ENCODE measurements at regions of chr20 and their contacts with region 1.

Region 1: DNA sequence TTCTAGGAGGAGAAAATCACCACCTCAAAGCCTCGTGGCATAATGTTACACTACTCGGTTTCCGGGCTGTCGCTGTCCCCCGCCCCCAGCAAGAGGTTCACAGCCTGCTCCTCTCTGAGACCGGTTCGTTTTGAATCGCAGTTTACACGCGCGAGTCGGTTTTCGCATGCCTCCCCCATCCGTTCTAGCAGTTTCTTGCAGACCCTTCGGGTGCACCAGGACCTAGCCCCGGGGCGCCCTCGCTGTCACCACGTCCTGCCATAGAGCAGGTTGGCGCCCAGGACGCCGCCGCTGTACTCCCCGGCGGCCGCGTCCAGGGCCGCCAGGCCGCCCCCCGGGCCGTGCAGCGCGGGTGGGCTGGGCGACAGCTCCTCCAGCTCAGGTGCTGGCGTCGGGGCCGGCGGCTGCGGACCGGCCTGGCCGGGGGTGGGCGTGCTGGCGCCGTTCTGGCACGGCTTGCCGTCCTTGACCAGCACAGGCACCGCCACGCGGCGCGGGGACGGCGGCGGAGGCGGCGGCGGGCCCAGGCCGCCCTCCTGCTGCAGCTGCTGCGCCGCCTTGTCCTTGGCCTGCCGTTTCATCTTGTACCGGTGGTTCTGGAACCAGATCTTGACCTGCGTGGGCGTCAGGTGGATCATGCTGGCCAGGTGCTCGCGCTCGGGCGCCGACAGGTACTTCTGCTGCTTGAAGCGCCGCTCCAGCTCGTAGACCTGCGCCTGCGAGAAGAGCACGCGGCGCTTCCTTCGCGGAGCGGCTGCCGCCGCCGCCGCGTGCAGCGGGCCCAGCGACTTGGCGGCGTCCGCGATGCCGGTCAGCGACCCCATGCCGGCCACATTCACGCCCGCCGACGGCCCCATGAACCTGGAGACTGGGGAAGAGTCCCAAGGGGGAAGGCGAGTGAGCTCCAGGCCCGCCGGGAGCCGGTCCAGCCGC is 1.4 kb downstream of the NKX2-4 start:
- DNase-seq: peak; percentile 84
- H3K4me3 Mint-ChIP-seq: peak overlapping the region; percentile 71
- H3K27ac Mint-ChIP-seq: peak overlapping the region; percentile 46
- H3K4me1 Mint-ChIP-seq: peaks cover 23% of the 10 kb centered on the region
- H3K27me3 Mint-ChIP-seq: peaks cover 72% of the 10 kb centered on the region

Region 2: DNA sequence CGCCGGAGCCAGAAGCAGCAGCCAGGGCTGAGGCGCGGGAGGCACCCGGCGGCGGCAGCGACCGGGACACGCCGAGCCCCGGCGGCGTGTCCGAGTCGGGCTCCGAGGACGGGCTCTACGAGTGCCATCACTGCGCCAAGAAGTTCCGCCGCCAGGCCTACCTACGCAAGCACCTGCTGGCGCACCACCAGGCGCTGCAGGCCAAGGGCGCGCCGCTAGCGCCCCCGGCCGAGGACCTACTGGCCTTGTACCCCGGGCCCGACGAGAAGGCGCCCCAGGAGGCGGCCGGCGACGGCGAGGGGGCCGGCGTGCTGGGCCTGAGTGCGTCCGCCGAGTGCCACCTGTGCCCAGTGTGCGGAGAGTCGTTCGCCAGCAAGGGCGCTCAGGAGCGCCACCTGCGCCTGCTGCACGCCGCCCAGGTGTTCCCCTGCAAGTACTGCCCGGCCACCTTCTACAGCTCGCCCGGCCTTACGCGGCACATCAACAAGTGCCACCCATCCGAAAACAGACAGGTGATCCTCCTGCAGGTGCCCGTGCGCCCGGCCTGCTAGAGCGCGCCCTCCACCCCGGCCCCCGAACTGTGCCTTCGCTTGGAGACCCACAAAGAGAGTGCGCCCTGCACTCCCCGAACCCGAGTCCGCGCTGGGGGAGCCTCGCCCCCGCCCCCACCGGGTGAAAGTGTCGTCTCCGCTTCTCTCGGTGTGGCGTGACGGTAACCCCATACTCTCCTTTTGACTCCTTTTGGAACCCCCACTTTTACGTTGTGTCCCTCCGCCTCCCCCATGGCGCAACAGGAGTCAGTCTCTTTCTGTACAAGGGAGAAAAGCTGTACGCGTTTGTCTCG is 1026.5 kb before region 1 on chr20:
- intact Hi-C with region 1: loop called (anchors 5 kb)
- DNase-seq: peak; percentile 62
- H3K4me3 Mint-ChIP-seq: peak overlapping the region; percentile 83
- H3K27ac Mint-ChIP-seq: peak overlapping the region; percentile 83
- H3K4me1 Mint-ChIP-seq: peaks cover 19% of the 10 kb centered on the region
- H3K27me3 Mint-ChIP-seq: peaks cover 56% of the 10 kb centered on the region

Region 3: DNA sequence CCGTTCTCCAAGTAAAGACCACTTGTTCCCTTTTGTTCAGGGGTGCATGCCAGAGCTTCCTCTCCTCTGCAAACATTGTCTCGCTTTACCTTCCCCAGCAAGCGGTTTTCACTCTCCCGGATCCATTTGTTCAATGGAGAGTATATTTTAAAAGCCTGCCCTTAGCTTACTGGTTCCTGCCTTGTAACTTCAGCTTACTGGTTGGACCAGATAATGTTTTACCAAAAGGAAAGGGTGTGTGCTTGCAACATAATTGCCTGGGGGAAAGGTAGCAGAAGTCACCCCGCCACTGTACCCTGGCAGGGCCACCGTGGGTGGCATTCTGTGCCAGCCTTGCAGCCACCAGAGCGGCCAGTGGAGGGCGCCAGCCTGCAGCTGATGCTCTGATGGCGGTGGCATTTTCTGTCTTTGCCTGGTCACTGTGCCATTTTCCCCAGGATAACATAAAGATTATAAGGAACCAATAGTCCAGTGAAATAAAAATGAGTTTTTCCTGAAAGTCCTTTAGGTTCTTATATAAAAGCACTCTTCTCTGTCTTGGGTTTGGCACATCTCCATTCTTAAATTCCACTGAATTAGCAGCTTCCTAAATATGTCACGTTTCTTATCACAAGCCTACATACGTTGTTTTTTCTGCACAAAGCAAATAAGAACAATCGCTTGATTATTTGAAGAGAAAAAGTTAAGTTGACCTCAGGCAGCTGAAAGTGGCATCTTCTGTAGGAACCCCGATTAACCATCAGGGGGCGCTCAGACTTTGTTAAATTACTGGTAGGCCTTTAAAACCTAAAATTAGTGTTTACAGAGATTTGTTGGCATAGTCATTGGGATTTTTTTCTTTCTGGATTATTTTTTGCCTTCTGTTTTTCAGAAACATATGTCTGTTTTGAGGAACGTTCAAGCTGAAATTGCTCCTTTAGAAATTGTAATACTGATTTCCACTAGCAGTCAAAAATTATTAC is 160.2 kb before region 1 on chr20:
- intact Hi-C with region 1: loop called (anchors 5 kb)
- DNase-seq: peak; percentile 89
- H3K4me3 Mint-ChIP-seq: no peak overlapping the region
- H3K27ac Mint-ChIP-seq: no peak overlapping the region
- H3K4me1 Mint-ChIP-seq: peaks cover 2% of the 10 kb centered on the region
- H3K27me3 Mint-ChIP-seq: no peaks in the 10 kb centered on the region

Region 4: GRCh38 chr20:21342656-21343345 is 53.1 kb before region 1 on chr20:
- intact Hi-C with region 1: no loop called
- DNase-seq: no peak
- H3K4me3 Mint-ChIP-seq: no peak overlapping the region
- H3K27ac Mint-ChIP-seq: no peak overlapping the region
- H3K4me1 Mint-ChIP-seq: peaks cover 2% of the 10 kb centered on the region
- H3K27me3 Mint-ChIP-seq: no peaks in the 10 kb centered on the region

Region 5: GRCh38 chr20:21465799-21466198 is 69.9 kb after region 1 on chr20:
- intact Hi-C with region 1: no loop called
- DNase-seq: no peak
- H3K4me3 Mint-ChIP-seq: no peak overlapping the region
- H3K27ac Mint-ChIP-seq: no peak overlapping the region
- H3K4me1 Mint-ChIP-seq: no peaks in the 10 kb centered on the region
- H3K27me3 Mint-ChIP-seq: peaks cover 10% of the 10 kb centered on the region

Region 6: GRCh38 chr20:21520702-21521595 is 125.0 kb after region 1 on chr20:
- intact Hi-C with region 1: loop called (anchors 5 kb)
- DNase-seq: peak; percentile 61
- H3K4me3 Mint-ChIP-seq: peak overlapping the region; percentile 23
- H3K27ac Mint-ChIP-seq: peak overlapping the region; percentile 80
- H3K4me1 Mint-ChIP-seq: peaks cover 18% of the 10 kb centered on the region
- H3K27me3 Mint-ChIP-seq: peaks cover 87% of the 10 kb centered on the region

Region 7: DNA sequence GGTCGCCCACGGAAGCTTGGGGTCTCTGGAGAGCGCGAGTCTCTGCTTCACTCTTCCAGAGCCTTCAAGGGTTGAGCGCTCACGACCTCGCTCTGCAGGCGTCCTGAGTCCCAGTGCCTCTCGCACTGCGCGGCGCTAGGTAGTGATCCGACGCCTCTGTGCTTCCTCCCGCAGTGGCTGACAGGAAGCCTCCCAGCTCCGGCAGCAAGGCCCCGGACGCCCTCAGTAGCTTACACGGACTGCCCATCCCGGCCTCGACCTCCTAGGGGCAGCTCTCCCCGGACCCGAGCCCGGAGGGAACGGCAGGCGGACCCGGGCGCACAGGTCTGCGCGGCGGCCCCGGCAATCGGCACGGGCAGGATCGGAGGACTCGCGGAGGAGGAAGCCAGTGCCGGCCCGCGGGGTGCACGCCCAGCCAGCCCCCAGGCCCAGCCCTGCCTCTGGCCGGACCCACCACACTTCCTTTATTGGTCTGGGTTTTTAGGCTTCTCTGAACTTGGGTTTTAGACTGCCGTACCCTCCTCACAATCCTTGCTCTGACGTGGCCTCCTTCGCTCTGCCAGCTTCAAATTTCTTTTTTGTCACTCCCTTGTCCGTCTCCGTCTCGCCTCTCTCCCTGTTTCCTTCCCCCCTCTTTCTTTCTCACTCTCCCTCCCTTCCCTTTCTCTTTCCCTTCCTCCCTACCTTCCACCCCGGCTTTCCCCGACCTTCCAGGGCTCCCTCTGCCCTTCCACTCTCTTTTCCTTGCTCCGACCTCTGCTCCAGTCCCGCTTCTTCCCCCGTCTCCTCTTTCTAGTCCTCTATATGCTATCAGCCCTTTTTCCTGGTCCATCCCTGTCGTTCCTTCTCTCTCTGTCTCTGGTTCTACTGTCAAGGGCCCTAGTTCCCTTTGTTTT is 318.6 kb after region 1 on chr20:
- intact Hi-C with region 1: loop called (anchors 5 kb)
- DNase-seq: no peak
- H3K4me3 Mint-ChIP-seq: no peak overlapping the region
- H3K27ac Mint-ChIP-seq: no peak overlapping the region
- H3K4me1 Mint-ChIP-seq: no peaks in the 10 kb centered on the region
- H3K27me3 Mint-ChIP-seq: peaks cover 68% of the 10 kb centered on the region

Measured in activated CD4-positive, alpha-beta T cell treated with anti-CD3 and anti-CD28 coated beads, Interleukin-2, amount 10 ng/mL, durations not matched to agents 24 days and 14 days (primary cell).